Natural killer cell (primary cell): ENCODE measurements at regions of chr22 and their contacts with region 1.

Region 1: DNA sequence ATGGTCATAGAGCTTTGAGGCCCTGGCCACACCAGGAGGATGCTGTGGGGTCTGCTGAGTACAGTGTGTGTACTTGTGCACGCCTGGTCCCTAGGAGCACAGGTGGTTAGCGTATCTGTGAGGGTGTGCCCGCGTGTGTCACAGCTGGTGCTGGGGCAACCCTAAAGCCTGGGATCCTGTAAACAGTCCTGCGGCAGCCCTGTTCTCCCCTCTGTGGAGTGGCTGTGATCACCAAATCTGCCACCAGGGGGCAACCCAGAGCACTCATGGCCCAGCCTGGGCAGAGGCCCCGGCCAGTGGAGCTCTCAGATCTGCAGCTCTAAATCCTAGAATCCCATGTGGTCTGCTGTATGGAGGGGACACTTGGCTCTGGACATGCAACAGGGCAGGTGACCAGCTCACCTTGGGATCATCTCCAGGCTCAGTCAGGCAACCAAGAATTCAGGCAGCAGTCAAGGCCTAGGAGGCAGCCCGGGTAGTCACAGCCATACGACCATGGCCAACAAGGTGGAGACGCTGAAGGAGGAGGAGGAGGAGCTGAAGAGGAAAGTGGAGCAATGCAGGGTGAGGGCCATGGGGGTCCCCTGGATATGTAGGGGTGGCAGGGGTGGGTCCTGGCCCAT is 3.9 kb downstream of the SH3BP1 start:
- DNase-seq: peak; percentile 90
- ATAC-seq: peak; percentile 69 to 82 (median 71)
- H3K4me3 ChIP-seq: no peak overlapping the region
- H3K4me3 Mint-ChIP-seq: peak overlapping the region; percentile 53
- H3K27ac ChIP-seq: peak overlapping the region; percentile 31
- H3K27ac Mint-ChIP-seq: peak overlapping the region; percentile 75
- H3K4me1 ChIP-seq: peaks cover 46% of the 10 kb centered on the region
- H3K4me1 Mint-ChIP-seq: peaks cover 18 to 50% of the 10 kb centered on the region in 2 donors
- H3K27me3 ChIP-seq: no peaks in the 10 kb centered on the region
- H3K27me3 Mint-ChIP-seq: no peaks in the 10 kb centered on the region
- CTCF ChIP-seq: peak; percentile 91

Region 2: GRCh38 chr22:37218771-37219411 is 424.4 kb before region 1 on chr22:
- intact Hi-C with region 1: no loop called
- DNase-seq: peak in 1 of 2 donors; percentile 91
- ATAC-seq: peak; percentile 25 to 53 (median 42)
- H3K4me3 ChIP-seq: no peak overlapping the region
- H3K4me3 Mint-ChIP-seq: peak overlapping the region; percentile 47
- H3K27ac ChIP-seq: peak overlapping the region; percentile 53
- H3K27ac Mint-ChIP-seq: peak overlapping the region; percentile 21 to 68
- H3K4me1 ChIP-seq: peaks cover 58% of the 10 kb centered on the region
- H3K4me1 Mint-ChIP-seq: peaks cover 48 to 57% of the 10 kb centered on the region in 2 donors
- H3K27me3 ChIP-seq: no peaks in the 10 kb centered on the region
- H3K27me3 Mint-ChIP-seq: peaks cover 0 to 2% of the 10 kb centered on the region in 2 donors
- CTCF ChIP-seq: no peak

Region 3: GRCh38 chr22:37623075-37624016 is 20.0 kb before region 1 on chr22:
- intact Hi-C with region 1: loop called (anchors 2 kb)
- DNase-seq: peak; percentile 76 to 87
- ATAC-seq: peak; percentile 84 to 90 (median 86)
- H3K4me3 ChIP-seq: no peak overlapping the region
- H3K4me3 Mint-ChIP-seq: peak overlapping the region; percentile 76
- H3K27ac ChIP-seq: peak overlapping the region; percentile 52
- H3K27ac Mint-ChIP-seq: peak overlapping the region; percentile 88 to 89
- H3K4me1 ChIP-seq: peaks cover 52% of the 10 kb centered on the region
- H3K4me1 Mint-ChIP-seq: peaks cover 27 to 48% of the 10 kb centered on the region in 2 donors
- H3K27me3 ChIP-seq: no peaks in the 10 kb centered on the region
- H3K27me3 Mint-ChIP-seq: no peaks in the 10 kb centered on the region
- CTCF ChIP-seq: peak; percentile 96

Region 4: GRCh38 chr22:37658133-37659065 is 15.1 kb after region 1 on chr22 and contains the start of gene PDXP:
- intact Hi-C with region 1: no loop called
- DNase-seq: peak; percentile 97 to 99
- ATAC-seq: peak; percentile 87 to 97 (median 89)
- H3K4me3 ChIP-seq: peak within 1 kb of the TSS; percentile 48
- H3K4me3 Mint-ChIP-seq: peak within 1 kb of the TSS; percentile 86
- H3K27ac ChIP-seq: peak within 1 kb of the TSS; percentile 64
- H3K27ac Mint-ChIP-seq: peak within 1 kb of the TSS; percentile 92 to 95
- H3K4me1 ChIP-seq: peaks cover 42% of the 10 kb centered on the region
- H3K4me1 Mint-ChIP-seq: peaks cover 37 to 47% of the 10 kb centered on the region in 2 donors
- H3K27me3 ChIP-seq: no peaks in the 10 kb centered on the region
- H3K27me3 Mint-ChIP-seq: no peaks in the 10 kb centered on the region
- CTCF ChIP-seq: no peak
- total RNA-seq, gene PDXP: 8.3 to 14.2 (median 13.4) TPM

Region 5: DNA sequence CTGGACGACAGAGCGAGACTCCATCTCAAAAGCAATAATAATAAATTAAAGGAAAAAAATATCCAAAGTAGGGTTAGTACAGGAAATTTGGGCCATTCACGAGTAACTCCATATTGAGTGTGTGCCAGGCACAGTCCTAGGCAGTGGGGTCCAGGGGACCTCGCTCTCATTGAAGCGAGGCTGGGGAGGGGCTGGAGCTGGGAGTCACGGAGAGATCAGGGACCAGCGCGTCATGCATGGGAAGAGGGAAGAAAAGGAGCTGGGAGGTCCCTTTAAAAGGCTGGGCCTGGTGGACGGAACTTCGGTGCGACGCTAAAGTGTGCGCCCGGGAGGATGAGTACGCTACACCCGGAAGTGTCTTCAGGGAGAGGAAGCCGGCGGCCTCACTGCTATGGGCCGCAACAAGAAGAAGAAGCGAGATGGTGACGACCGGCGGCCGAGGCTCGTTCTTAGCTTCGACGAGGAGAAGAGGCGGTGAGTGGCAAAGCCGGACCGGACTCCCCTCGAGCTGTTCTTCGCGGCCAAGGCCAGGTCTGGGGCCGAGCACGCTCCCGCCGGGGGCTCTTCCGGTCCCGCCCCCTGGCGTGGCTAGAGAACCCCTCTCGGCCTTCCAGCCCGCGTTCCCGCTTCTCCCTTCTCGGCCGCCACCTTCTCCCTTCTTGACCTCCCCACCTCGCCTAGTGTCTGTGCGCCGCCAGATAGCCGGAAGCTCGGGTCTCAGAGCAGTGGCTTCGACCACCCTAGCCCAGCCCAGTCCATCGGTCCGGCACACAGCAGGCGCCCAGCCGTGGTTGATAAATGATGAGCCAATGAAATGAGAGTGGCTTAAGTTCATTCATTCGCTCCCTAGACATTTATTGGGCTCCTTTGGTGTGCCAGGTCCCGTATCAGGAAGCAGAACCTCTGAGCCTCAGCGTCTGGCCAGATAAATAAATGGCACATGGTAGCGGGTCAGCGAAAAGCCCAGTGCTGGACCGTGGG is 43.0 kb after region 1 on chr22 and contains the start of gene NOL12:
- intact Hi-C with region 1: loop called (anchors 1 kb)
- DNase-seq: peak; percentile 78 to 90
- ATAC-seq: peak; percentile 91 to 93 (median 92)
- H3K4me3 ChIP-seq: peak within 1 kb of the TSS; percentile 89
- H3K4me3 Mint-ChIP-seq: peak within 1 kb of the TSS; percentile 98
- H3K27ac ChIP-seq: peak within 1 kb of the TSS; percentile 60
- H3K27ac Mint-ChIP-seq: peak within 1 kb of the TSS; percentile 91 to 97
- H3K4me1 ChIP-seq: peaks cover 27% of the 10 kb centered on the region
- H3K4me1 Mint-ChIP-seq: peaks cover 18 to 32% of the 10 kb centered on the region in 2 donors
- H3K27me3 ChIP-seq: no peaks in the 10 kb centered on the region
- H3K27me3 Mint-ChIP-seq: no peaks in the 10 kb centered on the region
- CTCF ChIP-seq: no peak
- total RNA-seq, gene NOL12: 28.0 to 45.1 (median 39.0) TPM